AG04450 (cell line): ENCODE measurements at regions of chr19 and their contacts with region 1.

Region 1: GRCh38 chr19:8526345-8527067 is 12.5 kb upstream of the ZNF414 start:
- DNase-seq: peak; percentile 78
- H3K4me3 ChIP-seq: peak overlapping the region; percentile 88
- H3K27ac ChIP-seq: peak overlapping the region; percentile 93
- H3K27me3 ChIP-seq: no peaks in the 10 kb centered on the region
- CTCF ChIP-seq: no peak

Region 2: GRCh38 chr19:8505680-8506401 is 20.7 kb before region 1 on chr19:
- CTCF ChIA-PET with region 1: interaction called, 12 read pairs
- POLR2A ChIA-PET with region 1: no interaction called
- DNase-seq: peak; percentile 18
- H3K4me3 ChIP-seq: peak overlapping the region; percentile 61
- H3K27ac ChIP-seq: no peak overlapping the region
- H3K27me3 ChIP-seq: no peaks in the 10 kb centered on the region
- CTCF ChIP-seq: peak; percentile 92

Region 3: DNA sequence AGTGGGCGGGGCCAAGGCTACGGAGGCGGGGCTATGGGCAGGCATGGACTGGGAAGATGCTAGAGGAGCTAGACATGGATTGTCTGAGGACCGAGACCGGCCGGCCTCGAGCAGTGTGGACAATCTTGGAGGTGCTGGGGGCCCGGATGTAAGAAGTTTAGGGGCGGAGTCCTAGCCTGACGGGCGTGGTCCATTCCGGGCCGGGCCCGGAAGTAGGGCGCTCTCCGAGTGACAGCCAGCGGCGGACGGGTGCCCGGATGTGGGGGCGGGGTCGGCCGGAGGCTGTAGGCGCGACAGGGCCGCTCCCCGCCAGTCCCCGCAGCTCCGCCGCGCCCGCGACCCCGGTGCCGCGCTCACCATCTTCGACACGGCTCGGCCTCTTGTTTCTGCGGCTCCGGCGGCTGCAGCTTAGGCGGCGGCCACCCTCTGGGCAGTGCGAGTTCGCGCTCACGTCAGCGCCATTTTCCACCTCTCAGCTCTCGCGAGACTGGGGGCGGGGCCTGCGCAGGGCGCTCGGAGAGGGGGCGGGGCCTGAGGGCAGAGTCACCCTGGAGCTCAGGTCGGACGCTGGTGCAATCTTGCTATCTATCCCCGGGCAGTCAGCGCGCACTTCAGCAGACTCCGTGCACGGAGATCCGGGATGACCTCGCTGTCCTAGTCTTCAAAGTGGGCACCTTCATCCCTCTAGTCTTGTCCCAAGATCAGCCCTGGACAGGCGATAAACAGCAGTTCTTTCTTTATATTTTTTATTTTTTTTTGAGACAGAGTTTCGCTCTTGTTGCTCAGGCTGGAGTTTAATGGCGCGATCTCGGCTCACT is 12.6 kb before region 1 on chr19 and contains the start of gene ZNF414:
- CTCF ChIA-PET with region 1: interaction called, 3 read pairs
- POLR2A ChIA-PET with region 1: interaction called, 13 read pairs
- DNase-seq: peak; percentile 92
- H3K4me3 ChIP-seq: peak within 1 kb of the TSS; percentile 76
- H3K27ac ChIP-seq: peak within 1 kb of the TSS; percentile 73
- H3K27me3 ChIP-seq: peaks cover 3% of the 10 kb centered on the region
- CTCF ChIP-seq: no peak
- polyA plus RNA-seq, gene ZNF414: 2.0 and 3.6 TPM in 2 replicates

Region 4: DNA sequence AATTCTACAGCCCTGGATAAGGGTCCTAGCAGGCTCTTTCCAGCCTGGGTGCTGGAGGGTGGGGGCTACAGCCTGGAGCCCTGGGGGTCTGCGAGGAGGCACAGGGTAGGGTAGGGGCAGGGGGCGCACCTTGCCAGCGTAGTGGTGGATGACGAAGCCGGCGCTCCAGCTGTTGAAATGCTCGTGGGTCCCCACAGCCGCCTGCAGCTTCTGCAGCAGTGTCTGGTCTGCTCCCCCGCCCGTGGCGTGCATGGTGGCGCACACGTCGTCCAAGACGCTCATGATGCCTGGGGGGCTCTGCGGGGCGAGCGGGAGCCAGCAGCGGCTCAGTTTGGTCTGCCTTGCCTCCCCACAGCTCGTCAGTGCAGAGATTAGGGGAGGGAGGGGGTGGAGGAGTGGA is 17.7 kb after region 1 on chr19:
- CTCF ChIA-PET with region 1: no interaction called
- POLR2A ChIA-PET with region 1: interaction called, 10 read pairs
- DNase-seq: no peak
- H3K4me3 ChIP-seq: no peak overlapping the region
- H3K27ac ChIP-seq: no peak overlapping the region
- H3K27me3 ChIP-seq: no peaks in the 10 kb centered on the region
- CTCF ChIP-seq: no peak

Region 5: DNA sequence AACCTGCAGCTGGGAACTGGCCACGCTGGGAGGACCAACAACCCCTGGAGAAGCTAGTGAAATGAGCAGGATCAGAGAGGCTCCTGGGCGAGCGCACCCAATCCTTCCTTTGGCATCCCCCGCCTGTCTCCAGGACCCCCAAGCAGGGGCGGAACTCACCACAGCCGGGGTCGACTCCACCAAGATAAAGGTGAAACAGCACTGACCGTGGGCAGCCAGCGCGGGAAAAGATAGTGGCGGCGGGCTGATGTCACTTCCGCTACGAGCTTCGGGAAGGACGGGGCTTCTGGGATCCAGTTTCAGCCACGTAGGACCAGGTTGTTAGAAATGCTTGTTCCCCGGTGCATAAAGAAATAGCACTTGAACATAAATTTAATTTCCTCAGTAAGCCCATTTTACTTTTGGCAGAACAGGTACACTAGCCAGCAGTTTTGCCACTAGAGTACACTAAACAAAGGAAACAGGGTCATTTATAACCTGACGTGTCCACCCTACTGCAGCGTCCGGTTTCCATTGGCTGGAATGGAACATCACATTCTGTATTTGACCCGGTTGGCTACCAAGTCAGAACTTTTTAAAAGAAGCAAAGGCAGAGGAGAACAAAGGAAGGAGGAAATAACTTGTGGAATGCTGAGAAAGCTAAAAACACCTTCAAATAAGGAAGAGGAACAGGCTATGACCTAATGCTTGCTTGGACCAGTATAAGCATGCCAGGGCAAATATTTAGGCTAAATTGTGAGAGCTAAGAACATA is 1173.9 kb after region 1 on chr19:
- CTCF ChIA-PET with region 1: no interaction called
- POLR2A ChIA-PET with region 1: no interaction called
- DNase-seq: no peak
- H3K4me3 ChIP-seq: no peak overlapping the region
- H3K27ac ChIP-seq: no peak overlapping the region
- H3K27me3 ChIP-seq: no peaks in the 10 kb centered on the region
- CTCF ChIP-seq: no peak